Gastrocnemius medialis (tissue), 4 donors: ENCODE measurements at regions of chr11 and their contacts with region 1.

Region 1: GRCh38 chr11:36574486-36574885 is 6.7 kb downstream of the RAG1 start:
- DNase-seq: no peak
- ATAC-seq: no peak
- H3K4me3 ChIP-seq: no peak overlapping the region
- H3K27ac ChIP-seq: no peak overlapping the region
- H3K4me1 ChIP-seq: no peaks in the 10 kb centered on the region
- H3K27me3 ChIP-seq: peaks cover 0 to 3% (median 0%) of the 10 kb centered on the region in 3 donors
- CTCF ChIP-seq: no peak
- POLR2A ChIP-seq: no peak

Region 2: DNA sequence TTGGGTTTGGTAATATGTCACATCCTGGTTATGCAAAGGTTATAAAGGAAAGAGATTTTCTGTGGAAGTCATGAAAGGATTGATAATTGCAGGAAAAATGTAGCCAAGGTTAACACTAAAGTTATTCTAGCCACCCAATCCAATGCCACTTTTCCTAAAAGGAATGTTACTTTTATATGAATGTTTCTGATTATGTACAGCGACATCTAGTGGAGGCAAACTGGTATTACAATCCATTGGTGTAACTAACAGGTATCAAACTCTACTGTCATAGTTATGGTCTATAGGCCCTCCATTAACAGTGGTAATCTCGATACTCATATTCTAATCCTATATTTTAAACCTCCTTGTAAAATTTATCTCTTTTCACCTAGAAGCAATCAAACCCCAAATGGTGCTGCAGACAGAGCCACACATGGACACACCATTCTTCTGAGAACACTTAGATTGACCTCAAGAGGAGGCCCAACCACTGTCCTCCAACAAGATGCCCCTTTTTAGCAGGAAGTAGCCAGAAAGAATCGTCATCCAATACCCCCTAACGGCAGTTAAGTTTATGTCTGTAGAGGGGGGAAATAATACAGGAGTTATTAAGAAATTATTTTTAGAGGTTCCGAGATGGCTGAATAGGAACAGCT is 98.4 kb after region 1 on chr11:
- in situ Hi-C with region 1: loop called in 2 of 4 experiments (anchors 5 to 10 kb)
- intact Hi-C with region 1: no loop called
- DNase-seq: no peak
- ATAC-seq: peak in 1 of 2 donors; percentile 30
- H3K4me3 ChIP-seq: no peak overlapping the region
- H3K27ac ChIP-seq: no peak overlapping the region
- H3K4me1 ChIP-seq: no peaks in the 10 kb centered on the region
- H3K27me3 ChIP-seq: no peaks in the 10 kb centered on the region
- CTCF ChIP-seq: peak; percentile 54 to 80 (median 70)
- POLR2A ChIP-seq: no peak

Region 3: DNA sequence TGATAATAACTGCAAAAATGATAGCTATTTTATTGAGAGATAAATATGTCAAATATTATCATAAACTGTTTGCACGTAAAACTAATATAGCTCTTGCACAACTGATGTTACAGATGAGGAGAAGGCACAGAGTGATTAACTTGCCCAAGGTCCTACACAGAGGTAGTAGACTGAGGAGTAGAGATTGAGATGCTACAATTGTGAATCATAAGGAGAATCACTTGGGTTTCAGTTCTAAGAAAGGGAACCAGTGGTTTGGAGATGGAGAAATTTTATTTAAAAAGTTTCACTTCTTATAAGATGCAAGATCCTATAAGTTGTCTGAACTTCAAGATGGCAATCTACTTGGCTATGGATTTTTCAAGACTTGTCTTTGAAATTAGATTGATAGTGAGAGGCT is 248.3 kb after region 1 on chr11:
- in situ Hi-C with region 1: no loop called
- intact Hi-C with region 1: no loop called
- DNase-seq: no peak
- ATAC-seq: no peak
- H3K4me3 ChIP-seq: no peak overlapping the region
- H3K27ac ChIP-seq: no peak overlapping the region
- H3K4me1 ChIP-seq: no peaks in the 10 kb centered on the region
- H3K27me3 ChIP-seq: no peaks in the 10 kb centered on the region
- CTCF ChIP-seq: no peak
- POLR2A ChIP-seq: no peak